PC-9 (cell line): ENCODE measurements at regions of chr6 and their contacts with region 1.

Region 1: DNA sequence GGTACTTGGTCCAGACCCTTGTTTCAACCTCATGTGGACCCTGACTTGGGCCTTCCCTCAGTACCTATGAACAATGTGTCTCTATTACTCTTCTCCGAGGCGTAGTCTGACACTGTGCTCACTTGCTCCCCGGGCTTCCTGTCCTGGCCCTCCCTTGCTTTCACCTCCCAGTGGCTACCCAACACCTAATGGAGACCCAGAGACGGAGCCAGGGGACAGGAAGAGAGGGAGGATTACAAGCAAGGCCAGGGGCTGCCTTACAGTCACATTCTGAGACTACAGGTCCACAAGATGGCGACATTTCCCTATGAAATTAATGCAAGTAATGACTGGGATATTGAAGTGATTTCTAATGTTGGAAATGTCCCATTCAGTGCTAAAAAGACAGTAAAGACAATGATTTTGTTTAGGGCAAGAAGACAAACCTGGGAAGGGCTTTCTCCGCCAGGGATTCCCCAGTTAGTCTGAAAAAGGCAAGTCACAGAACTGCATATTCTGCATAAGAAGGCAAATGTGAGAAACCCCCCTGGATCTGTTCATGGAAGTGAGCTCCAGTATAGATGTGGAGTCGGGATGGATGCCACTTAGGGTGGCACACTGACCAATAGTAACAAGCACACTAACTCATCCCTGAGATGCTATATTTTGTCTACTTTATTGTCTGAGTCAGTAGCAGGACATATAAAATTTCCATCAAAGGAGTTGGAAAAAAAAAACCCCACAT is 44.0 kb upstream of the ZBTB24 start:
- DNase-seq: peak; percentile 33 to 55
- H3K4me3 ChIP-seq: no peak overlapping the region
- H3K27ac ChIP-seq: no peak overlapping the region
- H3K4me1 ChIP-seq: no peaks in the 10 kb centered on the region
- H3K27me3 ChIP-seq: no peaks in the 10 kb centered on the region
- CTCF ChIP-seq: peak; percentile 80

Region 2: GRCh38 chr6:109373762-109374161 is 153.3 kb before region 1 on chr6:
- CTCF ChIA-PET with region 1: no interaction called
- POLR2A ChIA-PET with region 1: no interaction called
- intact Hi-C with region 1: no loop called
- DNase-seq: no peak
- H3K4me3 ChIP-seq: no peak overlapping the region
- H3K27ac ChIP-seq: no peak overlapping the region
- H3K4me1 ChIP-seq: peaks cover 13% of the 10 kb centered on the region; the same call in 1 of the 2 replicates
- H3K27me3 ChIP-seq: no peaks in the 10 kb centered on the region
- CTCF ChIP-seq: no peak

Region 3: DNA sequence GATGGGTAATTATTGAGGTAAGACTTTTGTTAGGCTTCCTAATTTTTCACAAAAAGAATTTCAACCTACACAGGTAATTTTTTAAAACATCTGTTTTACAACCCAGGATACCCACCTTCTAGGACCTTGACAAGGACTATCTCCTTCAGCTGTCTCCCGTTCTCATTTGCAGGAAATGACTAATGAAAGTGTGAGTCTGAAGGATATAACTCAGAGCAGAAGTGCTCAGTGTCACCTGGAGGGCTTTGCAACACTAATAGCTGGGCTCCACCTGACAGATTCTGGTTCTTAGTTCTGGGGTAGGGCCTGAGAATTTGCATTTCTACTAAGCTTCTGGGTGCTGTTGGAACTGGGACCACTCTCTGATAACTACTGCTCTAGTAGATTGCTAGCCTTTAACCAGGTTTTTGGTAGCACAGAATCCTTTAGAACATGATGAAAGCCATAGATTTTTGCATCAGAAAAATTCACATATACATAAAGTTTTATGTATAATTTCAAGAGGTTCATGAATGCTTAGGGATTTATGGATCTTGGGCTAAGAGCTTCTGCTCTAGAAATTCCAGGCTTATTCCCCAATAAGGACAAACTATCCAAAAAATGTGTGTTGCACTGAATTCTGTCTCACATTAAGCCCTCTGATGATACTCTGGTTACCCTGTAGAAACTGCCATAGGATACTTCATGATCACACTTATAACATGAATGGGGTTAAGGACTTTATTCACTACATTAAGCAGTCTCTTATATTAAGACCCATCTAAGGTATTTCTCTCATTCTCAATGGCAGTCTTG is 133.7 kb after region 1 on chr6:
- CTCF ChIA-PET with region 1: no interaction called
- POLR2A ChIA-PET with region 1: no interaction called
- intact Hi-C with region 1: no loop called
- DNase-seq: no peak
- H3K4me3 ChIP-seq: no peak overlapping the region
- H3K27ac ChIP-seq: no peak overlapping the region
- H3K4me1 ChIP-seq: no peaks in the 10 kb centered on the region
- H3K27me3 ChIP-seq: no peaks in the 10 kb centered on the region
- CTCF ChIP-seq: no peak

Region 4: GRCh38 chr6:110389689-110390382 is 862.8 kb after region 1 on chr6:
- CTCF ChIA-PET with region 1: no interaction called
- POLR2A ChIA-PET with region 1: no interaction called
- intact Hi-C with region 1: loop called (anchors 2 kb)
- DNase-seq: no peak
- H3K4me3 ChIP-seq: no peak overlapping the region
- H3K27ac ChIP-seq: no peak overlapping the region
- H3K4me1 ChIP-seq: no peaks in the 10 kb centered on the region
- H3K27me3 ChIP-seq: no peaks in the 10 kb centered on the region
- CTCF ChIP-seq: no peak